ENCODE measurements at regions of chr3 and their contacts with region 1.

Region 1: GRCh38 chr3:69324362-69325025 is 61.4 kb downstream of the FRMD4B start:
- DNase-seq: no peak
- ATAC-seq: peak; percentile 73
- H3K4me3 ChIP-seq: no peak overlapping the region
- H3K27ac ChIP-seq: no peak overlapping the region
- H3K4me1 ChIP-seq: peaks cover 61% of the 10 kb centered on the region
- H3K27me3 ChIP-seq: no peaks in the 10 kb centered on the region
- CTCF ChIP-seq: peak; percentile 50

Region 2: DNA sequence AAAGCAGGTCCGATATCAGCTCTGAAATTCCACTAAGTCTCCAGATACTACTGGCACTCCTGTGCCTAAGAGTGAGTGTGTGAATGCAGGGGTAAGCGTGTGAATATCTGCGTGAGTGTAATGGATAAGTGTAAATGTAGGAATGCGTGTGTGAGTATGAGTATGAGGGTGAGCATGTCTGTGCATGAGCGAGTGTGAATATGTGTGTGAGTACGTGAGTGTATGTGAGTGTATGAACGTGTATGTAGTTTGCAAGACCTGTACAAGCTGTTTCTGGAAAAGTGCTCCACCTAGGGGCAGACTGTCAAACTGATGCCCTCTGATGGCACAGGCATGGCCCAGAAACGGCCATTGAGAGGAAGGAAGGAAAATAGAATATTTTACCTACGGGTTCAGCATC is 85.8 kb after region 1 on chr3:
- intact Hi-C with region 1: loop called (anchors 10 kb)
- DNase-seq: peak; percentile 68
- ATAC-seq: peak; percentile 96
- H3K4me3 ChIP-seq: peak overlapping the region; percentile 25
- H3K27ac ChIP-seq: peak overlapping the region; percentile 34
- H3K4me1 ChIP-seq: peaks cover 15% of the 10 kb centered on the region
- H3K27me3 ChIP-seq: no peaks in the 10 kb centered on the region
- CTCF ChIP-seq: peak; percentile 82

Measured in upper lobe of right lung (tissue), 1 donor.